Motor neuron (in vitro differentiated cells): ENCODE measurements at regions of chr15 and their contacts with region 1.

Region 1: GRCh38 chr15:94412979-94413746 is 181.8 kb downstream of the MCTP2 start:
- ATAC-seq: peak in 2 of 8 experiments; percentile 39 to 44
- H3K4me3 ChIP-seq: no peak overlapping the region
- H3K27ac ChIP-seq: no peak overlapping the region
- H3K4me1 ChIP-seq: peaks cover 8 to 40% of the 10 kb centered on the region in 2 donors

Region 2: DNA sequence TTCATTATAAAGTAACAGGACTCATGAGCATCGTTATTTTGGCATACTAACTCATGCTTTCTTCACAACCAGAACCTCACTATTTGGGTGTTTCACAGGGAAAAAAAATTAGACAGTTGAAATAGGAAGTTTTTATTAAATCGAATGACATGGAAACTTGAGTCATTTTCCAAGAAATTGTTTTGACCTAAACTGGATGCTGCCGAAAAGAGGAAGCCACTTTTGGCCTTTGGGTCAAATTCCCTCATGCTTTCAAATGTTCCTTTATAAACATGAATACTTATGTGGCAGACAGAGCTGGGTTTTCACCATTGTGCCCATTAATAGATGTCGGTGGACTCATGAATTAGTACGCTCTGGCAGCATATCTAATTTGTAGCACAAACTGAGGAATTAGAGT is 43.1 kb after region 1 on chr15:
- in situ Hi-C with region 1: no loop called
- ATAC-seq: no peak
- H3K4me3 ChIP-seq: no peak overlapping the region
- H3K27ac ChIP-seq: no peak overlapping the region
- H3K4me1 ChIP-seq: no peaks in the 10 kb centered on the region

Region 3: GRCh38 chr15:94555842-94556516 is 142.8 kb after region 1 on chr15:
- in situ Hi-C with region 1: loop called in 1 of 9 experiments (anchors 25 kb)
- ATAC-seq: no peak
- H3K4me3 ChIP-seq: no peak overlapping the region
- H3K27ac ChIP-seq: no peak overlapping the region
- H3K4me1 ChIP-seq: no peaks in the 10 kb centered on the region

Region 4: GRCh38 chr15:94631608-94632007 is 218.4 kb after region 1 on chr15:
- in situ Hi-C with region 1: loop called in 1 of 9 experiments (anchors 25 kb)
- ATAC-seq: no peak
- H3K4me3 ChIP-seq: no peak overlapping the region
- H3K27ac ChIP-seq: no peak overlapping the region
- H3K4me1 ChIP-seq: peaks cover 0 to 4% of the 10 kb centered on the region in 2 donors